ENCODE measurements at regions of chr11 and their contacts with region 1.

Region 1: GRCh38 chr11:114400217-114400914 is at the starts of genes C11orf71 and RBM7:
- DNase-seq: peak; percentile 95
- ATAC-seq: peak; percentile 88
- H3K4me3 ChIP-seq: peak within 1 kb of the TSS; percentile 71 to 86
- H3K27ac ChIP-seq: peak within 1 kb of the TSS; percentile 94
- H3K4me1 ChIP-seq: peaks cover 0 to 14% of the 10 kb centered on the region in 2 experiments; a peak in 2 of 4 replicates
- H3K27me3 ChIP-seq: no peaks in the 10 kb centered on the region
- CTCF ChIP-seq: no peak
- POLR2A ChIP-seq: peak; percentile 93
- RAD21 ChIP-seq: no peak
- total RNA-seq, gene C11orf71: 4.3 TPM
- total RNA-seq, gene RBM7: 27.9 TPM

Region 2: GRCh38 chr11:113875234-113876073 is 524.9 kb before region 1 on chr11 and contains the start of gene USP28:
- CTCF ChIA-PET with region 1: no interaction called
- POLR2A ChIA-PET with region 1: no interaction called
- RAD21 ChIA-PET with region 1: no interaction called
- intact Hi-C with region 1: loop called (anchors 5 kb)
- DNase-seq: peak; percentile 85
- ATAC-seq: peak; percentile 84
- H3K4me3 ChIP-seq: peak within 1 kb of the TSS; percentile 75 to 80
- H3K27ac ChIP-seq: peak within 1 kb of the TSS; percentile 77
- H3K4me1 ChIP-seq: peaks cover 0 to 22% of the 10 kb centered on the region in 2 experiments; a peak in 3 of 4 replicates
- H3K27me3 ChIP-seq: no peaks in the 10 kb centered on the region
- CTCF ChIP-seq: 0 out of 6 replicates have a peak, but pooled peaks of 1 of the 3 experiments have one; percentile 7
- POLR2A ChIP-seq: peak; percentile 87
- RAD21 ChIP-seq: no peak
- total RNA-seq, gene USP28: 23.5 TPM

Region 3: DNA sequence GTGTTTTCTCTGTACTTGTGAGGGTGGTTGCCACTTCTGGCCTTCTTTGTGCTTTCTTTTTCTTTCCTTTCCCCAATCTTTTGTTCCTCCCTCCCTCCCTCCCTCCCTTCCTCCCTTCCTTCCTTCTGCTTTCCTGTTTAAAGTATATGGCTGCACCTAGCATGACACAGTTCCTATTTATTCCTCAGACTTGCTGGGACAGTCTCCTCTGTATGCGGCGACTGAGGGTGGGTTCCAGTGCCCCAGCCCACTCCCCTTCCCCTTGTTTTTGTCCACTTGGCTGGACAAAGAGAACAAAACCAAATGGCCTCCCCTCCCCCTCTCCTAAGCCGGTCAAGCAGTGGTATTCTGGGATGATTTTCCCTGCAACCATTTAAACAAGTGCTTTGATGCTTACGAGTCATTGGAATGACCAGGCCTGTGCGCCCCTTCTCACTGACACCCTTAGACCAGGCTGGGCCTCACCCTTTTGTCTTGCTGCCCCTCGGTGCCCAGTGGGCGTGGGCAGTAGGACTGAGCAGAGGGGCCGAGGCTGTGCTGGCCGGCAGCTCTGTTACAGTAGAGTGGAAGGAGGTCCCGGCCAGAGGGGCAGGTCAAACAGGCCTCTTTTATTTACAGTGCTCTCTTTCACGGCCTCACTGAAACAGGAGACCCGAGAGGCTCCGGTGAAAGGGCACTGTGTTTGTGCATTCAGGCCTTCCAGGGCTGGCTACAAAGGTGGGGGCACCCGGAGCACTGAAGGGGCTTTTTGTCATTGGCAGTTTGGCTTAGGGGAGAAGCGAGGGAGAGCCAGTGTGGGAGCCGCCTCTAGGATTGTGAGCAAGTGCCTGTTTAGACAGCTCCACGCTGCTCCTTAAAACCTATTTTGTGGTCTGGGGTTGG is 308.6 kb before region 1 on chr11:
- CTCF ChIA-PET with region 1: no interaction called
- POLR2A ChIA-PET with region 1: no interaction called
- RAD21 ChIA-PET with region 1: no interaction called
- intact Hi-C with region 1: no loop called
- DNase-seq: no peak
- ATAC-seq: no peak
- H3K4me3 ChIP-seq: no peak overlapping the region
- H3K27ac ChIP-seq: no peak overlapping the region
- H3K4me1 ChIP-seq: no peaks in the 10 kb centered on the region
- H3K27me3 ChIP-seq: peaks cover 22% of the 10 kb centered on the region
- CTCF ChIP-seq: no peak
- POLR2A ChIP-seq: no peak
- RAD21 ChIP-seq: no peak

Region 4: GRCh38 chr11:114348200-114349191 is 51.9 kb before region 1 on chr11:
- CTCF ChIA-PET with region 1: interaction called, 3 read pairs
- POLR2A ChIA-PET with region 1: no interaction called
- RAD21 ChIA-PET with region 1: no interaction called
- intact Hi-C with region 1: loop called (anchors 5 kb)
- DNase-seq: peak; percentile 51
- ATAC-seq: peak; percentile 83
- H3K4me3 ChIP-seq: no peak overlapping the region
- H3K27ac ChIP-seq: no peak overlapping the region
- H3K4me1 ChIP-seq: no peaks in the 10 kb centered on the region
- H3K27me3 ChIP-seq: no peaks in the 10 kb centered on the region
- CTCF ChIP-seq: peak; percentile 28 to 62 (median 45); a peak in 5 of 6 replicates
- POLR2A ChIP-seq: no peak
- RAD21 ChIP-seq: peak; percentile 58

Region 5: GRCh38 chr11:114439229-114440120 is 39.1 kb after region 1 on chr11 and contains the start of gene REXO2:
- CTCF ChIA-PET with region 1: no interaction called
- POLR2A ChIA-PET with region 1: no interaction called
- RAD21 ChIA-PET with region 1: no interaction called
- intact Hi-C with region 1: loop called (anchors 1 kb)
- DNase-seq: peak; percentile 89
- ATAC-seq: peak; percentile 96
- H3K4me3 ChIP-seq: peak within 1 kb of the TSS; percentile 81 to 95
- H3K27ac ChIP-seq: peak within 1 kb of the TSS; percentile 64
- H3K4me1 ChIP-seq: peaks cover 5 to 19% of the 10 kb centered on the region in 2 experiments; a peak in 3 of 4 replicates
- H3K27me3 ChIP-seq: no peaks in the 10 kb centered on the region
- CTCF ChIP-seq: peak in 1 of 3 experiments; percentile 32; a peak in 1 of 6 replicates
- POLR2A ChIP-seq: peak; percentile 56
- RAD21 ChIP-seq: peak; percentile 29
- total RNA-seq, gene REXO2: 72.5 TPM